Activated CD4-positive, alpha-beta memory T cell treated with anti-CD3 and anti-CD28 coated beads for 36 hours (primary cell): ENCODE measurements at regions of chr3 and their contacts with region 1.

Region 1: GRCh38 chr3:88113311-88114162 is 36.2 kb upstream of the C3orf38 start:
- DNase-seq: peak; percentile 56
- H3K4me3 Mint-ChIP-seq: no peak overlapping the region
- H3K27ac Mint-ChIP-seq: no peak overlapping the region
- H3K4me1 Mint-ChIP-seq: peaks cover 34% of the 10 kb centered on the region
- H3K27me3 Mint-ChIP-seq: no peaks in the 10 kb centered on the region

Region 2: DNA sequence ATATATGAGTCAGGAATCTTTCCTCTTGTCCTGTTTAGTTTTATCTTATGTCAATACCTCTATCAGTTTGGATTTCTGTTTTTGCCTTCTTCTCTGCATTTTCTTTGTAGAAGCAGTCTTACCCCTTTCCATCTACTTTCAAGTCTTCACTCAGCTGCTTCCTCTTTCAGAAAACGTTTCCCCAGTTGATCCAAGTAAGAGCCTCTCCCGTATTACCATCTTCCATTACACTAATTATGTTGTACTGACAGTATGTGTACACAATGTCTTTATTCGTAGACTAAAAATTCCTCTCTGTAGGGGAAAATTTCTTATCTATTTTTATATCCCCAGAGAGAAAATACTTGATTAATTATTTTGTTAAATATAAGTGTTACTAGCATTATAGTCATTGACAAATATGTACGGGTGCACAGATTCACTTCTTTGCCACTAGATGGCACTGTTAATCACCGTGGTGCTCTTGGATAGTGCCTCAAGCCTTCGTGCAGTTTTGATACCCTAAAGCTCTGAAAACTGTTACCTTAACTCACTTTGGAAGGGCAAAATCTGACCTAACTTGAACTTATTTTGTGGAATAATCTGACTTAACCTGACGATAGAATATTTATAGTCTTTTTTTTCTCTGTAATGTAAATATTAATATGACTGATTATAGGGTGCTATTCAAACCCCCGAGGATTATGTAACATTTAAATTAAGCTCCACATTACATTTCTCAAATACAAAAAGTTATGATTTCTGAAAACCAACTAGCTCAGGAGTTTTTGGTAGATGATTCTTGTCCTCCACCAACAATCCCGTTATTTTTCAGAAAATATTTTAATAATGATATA is 763.0 kb before region 1 on chr3:
- CTCF ChIA-PET with region 1: interaction called, 10 read pairs
- POLR2A ChIA-PET with region 1: no interaction called
- intact Hi-C with region 1: loop called (anchors 1 kb)
- DNase-seq: peak; percentile 16
- H3K4me3 Mint-ChIP-seq: no peak overlapping the region
- H3K27ac Mint-ChIP-seq: no peak overlapping the region
- H3K4me1 Mint-ChIP-seq: no peaks in the 10 kb centered on the region
- H3K27me3 Mint-ChIP-seq: no peaks in the 10 kb centered on the region

Region 3: DNA sequence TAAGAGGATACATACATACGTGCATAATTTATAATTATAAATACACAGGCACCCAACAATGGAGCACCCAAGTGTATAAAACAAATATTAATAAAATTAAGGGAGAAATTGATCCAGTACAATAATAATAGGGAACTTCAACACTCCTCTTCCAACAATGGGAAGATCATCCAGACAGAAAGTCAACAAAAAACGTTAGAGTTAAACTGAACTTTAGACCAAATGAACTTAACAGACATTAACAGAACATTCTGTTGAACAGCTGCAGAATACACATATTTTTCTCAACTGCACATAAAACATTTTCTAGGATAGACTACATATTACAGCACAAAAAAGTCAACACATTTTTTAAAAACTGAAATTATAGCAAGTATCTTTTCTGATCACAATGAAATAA is 394.5 kb before region 1 on chr3:
- CTCF ChIA-PET with region 1: no interaction called
- POLR2A ChIA-PET with region 1: no interaction called
- intact Hi-C with region 1: no loop called
- DNase-seq: no peak
- H3K4me3 Mint-ChIP-seq: no peak overlapping the region
- H3K27ac Mint-ChIP-seq: no peak overlapping the region
- H3K4me1 Mint-ChIP-seq: no peaks in the 10 kb centered on the region
- H3K27me3 Mint-ChIP-seq: no peaks in the 10 kb centered on the region

Region 4: DNA sequence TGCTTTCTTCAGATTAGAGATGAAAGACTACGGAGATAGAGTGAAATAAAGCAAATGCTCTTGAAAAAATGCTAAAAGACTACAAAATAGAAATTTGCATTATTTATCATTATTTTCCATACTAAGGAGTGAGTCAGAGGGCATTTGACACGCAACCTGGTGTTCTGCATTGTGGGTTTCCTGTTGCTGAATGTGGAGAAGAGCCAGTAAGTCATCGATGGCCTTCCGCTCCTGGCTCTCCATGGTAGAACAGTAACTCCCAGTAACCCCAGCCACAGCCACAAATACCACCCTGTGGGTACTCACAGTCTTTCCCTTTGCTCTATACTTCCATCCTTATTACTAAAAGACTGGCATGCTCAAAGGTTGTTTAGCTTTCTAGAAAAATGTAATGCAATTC is 116.2 kb before region 1 on chr3:
- CTCF ChIA-PET with region 1: interaction called, 9 read pairs
- POLR2A ChIA-PET with region 1: no interaction called
- intact Hi-C with region 1: loop called (anchors 2 kb)
- DNase-seq: peak; percentile 75
- H3K4me3 Mint-ChIP-seq: peak overlapping the region; percentile 22
- H3K27ac Mint-ChIP-seq: no peak overlapping the region
- H3K4me1 Mint-ChIP-seq: peaks cover 16% of the 10 kb centered on the region
- H3K27me3 Mint-ChIP-seq: peaks cover 2% of the 10 kb centered on the region

Region 5: GRCh38 chr3:88058591-88059368 is 54.8 kb before region 1 on chr3 and contains the starts of genes CGGBP1 and ZNF654:
- CTCF ChIA-PET with region 1: interaction called, 8 read pairs
- POLR2A ChIA-PET with region 1: interaction called, 4 read pairs
- intact Hi-C with region 1: loop called (anchors 1 kb)
- DNase-seq: peak; percentile 99
- H3K4me3 Mint-ChIP-seq: peak within 1 kb of the TSS; percentile 96
- H3K27ac Mint-ChIP-seq: peak within 1 kb of the TSS; percentile 98
- H3K4me1 Mint-ChIP-seq: peaks cover 50% of the 10 kb centered on the region
- H3K27me3 Mint-ChIP-seq: no peaks in the 10 kb centered on the region
- total RNA-seq, gene CGGBP1: 87.7 to 88.9 TPM
- total RNA-seq, gene ZNF654: 15.6 to 16.7 TPM

Region 6: GRCh38 chr3:88137836-88138235 is 24.3 kb after region 1 on chr3:
- CTCF ChIA-PET with region 1: interaction called, 10 read pairs
- POLR2A ChIA-PET with region 1: interaction called, 10 read pairs
- intact Hi-C with region 1: loop called (anchors 2 kb)
- DNase-seq: no peak
- H3K4me3 Mint-ChIP-seq: no peak overlapping the region
- H3K27ac Mint-ChIP-seq: no peak overlapping the region
- H3K4me1 Mint-ChIP-seq: peaks cover 21% of the 10 kb centered on the region
- H3K27me3 Mint-ChIP-seq: no peaks in the 10 kb centered on the region

Region 7: DNA sequence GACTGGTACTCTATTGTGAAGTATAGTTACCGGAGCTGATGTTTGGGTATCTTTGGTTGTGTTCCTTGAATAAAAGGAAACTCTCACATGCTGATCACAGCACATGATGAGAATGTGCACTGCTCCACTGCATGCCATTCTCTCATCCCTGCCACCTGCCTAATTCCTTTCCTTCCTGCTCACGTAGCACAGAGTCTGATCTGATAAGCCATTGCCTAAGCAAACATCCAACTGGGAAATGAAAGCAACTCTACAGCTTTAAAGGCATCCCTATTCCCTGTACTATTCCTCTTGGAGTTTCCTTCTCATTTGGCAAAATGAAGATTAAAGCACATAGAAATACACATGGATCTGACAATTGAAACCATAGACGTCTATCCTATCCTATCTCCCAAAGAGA is 396.0 kb after region 1 on chr3:
- CTCF ChIA-PET with region 1: no interaction called
- POLR2A ChIA-PET with region 1: no interaction called
- intact Hi-C with region 1: no loop called
- DNase-seq: no peak
- H3K4me3 Mint-ChIP-seq: no peak overlapping the region
- H3K27ac Mint-ChIP-seq: no peak overlapping the region
- H3K4me1 Mint-ChIP-seq: no peaks in the 10 kb centered on the region
- H3K27me3 Mint-ChIP-seq: no peaks in the 10 kb centered on the region